Right ventricle myocardium superior (tissue), 1 donor: ENCODE measurements at regions of chr7 and their contacts with region 1.

Region 1: DNA sequence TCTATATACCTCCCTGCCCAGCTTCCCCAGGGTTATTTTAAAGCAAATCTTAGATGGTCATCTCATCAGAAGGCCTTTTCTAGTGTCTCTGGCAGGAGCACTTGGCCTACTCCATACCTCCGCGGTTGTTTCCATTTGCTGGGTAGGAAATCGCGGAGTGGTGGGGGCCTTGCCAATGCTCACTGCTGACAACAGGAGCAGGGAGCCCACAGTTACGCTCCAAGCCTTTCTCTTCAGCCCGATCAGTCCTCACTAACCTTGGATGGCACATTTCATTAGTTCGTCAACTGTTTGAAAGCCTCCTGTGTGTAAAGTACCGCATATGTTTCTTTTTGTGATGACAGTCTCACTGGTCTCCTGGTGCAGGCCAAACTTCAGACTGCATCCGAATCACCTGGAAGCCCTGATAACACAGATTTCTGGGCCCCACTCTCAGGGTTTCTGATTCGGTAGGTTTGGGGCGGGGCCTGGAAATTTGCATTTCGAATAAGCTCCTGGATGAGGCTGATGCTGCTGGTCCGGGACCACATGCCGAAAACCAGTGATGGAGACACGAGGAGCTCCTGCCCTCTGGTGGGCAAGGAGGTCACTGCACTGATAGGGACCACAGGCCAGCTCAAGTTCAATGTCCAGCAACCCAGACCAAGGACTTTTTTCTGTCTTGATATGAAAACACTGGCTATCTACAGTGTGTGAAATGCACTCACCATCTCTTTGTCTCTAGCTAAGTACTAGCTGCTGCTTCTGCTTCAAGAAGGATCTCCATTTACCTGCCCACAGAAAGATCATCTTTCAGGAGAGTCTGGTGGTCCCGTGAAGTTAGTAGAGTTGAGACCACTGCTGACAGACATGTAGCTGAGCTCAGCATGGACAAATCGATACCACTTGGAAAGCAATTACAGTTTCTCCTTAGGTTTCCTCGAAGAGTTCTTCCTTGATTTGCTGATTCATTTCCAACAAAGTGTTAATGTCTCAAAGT is 14.0 kb downstream of the LRGUK start:
- DNase-seq: peak; percentile 79
- ATAC-seq: peak; percentile 84

Region 2: GRCh38 chr7:134186027-134186426 is 44.8 kb after region 1 on chr7:
- intact Hi-C with region 1: no loop called
- DNase-seq: no peak
- ATAC-seq: no peak

Region 3: GRCh38 chr7:134355927-134356326 is 214.7 kb after region 1 on chr7:
- intact Hi-C with region 1: loop called (anchors 5 kb)
- DNase-seq: peak; percentile 60
- ATAC-seq: peak; percentile 93

Region 4: GRCh38 chr7:134432296-134433152 is 291.3 kb after region 1 on chr7:
- intact Hi-C with region 1: no loop called
- DNase-seq: peak; percentile 92
- ATAC-seq: peak; percentile 98